ENCODE measurements at regions of chr2 and their contacts with region 1.

Region 1: GRCh38 chr2:209340522-209340921 is 83.3 kb upstream of the MAP2 start:
- DNase-seq: no peak
- ATAC-seq: no peak
- H3K4me3 ChIP-seq: no peak overlapping the region
- H3K27ac ChIP-seq: peak overlapping the region; percentile 72; the same call in 1 of the 2 replicates
- H3K4me1 ChIP-seq: peaks cover 6% of the 10 kb centered on the region; the same call in 1 of the 2 replicates
- H3K27me3 ChIP-seq: no peaks in the 10 kb centered on the region
- CTCF ChIP-seq: no peak

Region 2: DNA sequence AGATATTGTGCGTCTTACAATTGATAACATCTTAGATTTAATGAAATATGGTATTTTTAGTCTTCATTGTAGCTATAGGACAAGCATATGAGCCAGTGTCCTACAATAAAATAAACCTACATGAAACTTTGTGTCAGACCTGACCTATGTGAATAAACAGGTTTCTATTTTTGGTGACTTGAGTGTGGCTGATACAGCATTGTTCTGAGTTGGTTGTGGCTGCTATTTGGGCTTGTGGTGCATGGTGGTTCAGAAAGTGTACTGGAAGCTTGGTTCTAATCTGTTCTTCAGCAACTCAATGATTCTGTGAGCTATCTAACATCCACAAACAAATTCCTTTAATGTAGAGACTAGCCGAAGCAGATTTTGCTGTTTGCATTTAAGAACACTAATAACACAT is 18.5 kb after region 1 on chr2:
- CTCF ChIA-PET with region 1: no interaction called
- POLR2A ChIA-PET with region 1: no interaction called
- in situ Hi-C with region 1: no loop called
- intact Hi-C with region 1: no loop called
- DNase-seq: no peak
- ATAC-seq: no peak
- H3K4me3 ChIP-seq: no peak overlapping the region
- H3K27ac ChIP-seq: no peak overlapping the region; the same call in 1 of the 2 replicates
- H3K4me1 ChIP-seq: no peaks in the 10 kb centered on the region
- H3K27me3 ChIP-seq: no peaks in the 10 kb centered on the region
- CTCF ChIP-seq: no peak

Region 3: GRCh38 chr2:209960676-209961630 is 620.4 kb after region 1 on chr2:
- CTCF ChIA-PET with region 1: no interaction called
- POLR2A ChIA-PET with region 1: no interaction called
- in situ Hi-C with region 1: no loop called
- intact Hi-C with region 1: loop called (anchors 5 kb)
- DNase-seq: no peak
- ATAC-seq: peak; percentile 84
- H3K4me3 ChIP-seq: no peak overlapping the region
- H3K27ac ChIP-seq: no peak overlapping the region
- H3K4me1 ChIP-seq: no peaks in the 10 kb centered on the region; the same call in 1 of the 2 replicates
- H3K27me3 ChIP-seq: peaks cover 2% of the 10 kb centered on the region; the same call in 1 of the 2 replicates
- CTCF ChIP-seq: peak; percentile 78

Measured in Panc1 (cell line).